MCF 10A (cell line): ENCODE measurements at regions of chr10 and their contacts with region 1.

Region 1: DNA sequence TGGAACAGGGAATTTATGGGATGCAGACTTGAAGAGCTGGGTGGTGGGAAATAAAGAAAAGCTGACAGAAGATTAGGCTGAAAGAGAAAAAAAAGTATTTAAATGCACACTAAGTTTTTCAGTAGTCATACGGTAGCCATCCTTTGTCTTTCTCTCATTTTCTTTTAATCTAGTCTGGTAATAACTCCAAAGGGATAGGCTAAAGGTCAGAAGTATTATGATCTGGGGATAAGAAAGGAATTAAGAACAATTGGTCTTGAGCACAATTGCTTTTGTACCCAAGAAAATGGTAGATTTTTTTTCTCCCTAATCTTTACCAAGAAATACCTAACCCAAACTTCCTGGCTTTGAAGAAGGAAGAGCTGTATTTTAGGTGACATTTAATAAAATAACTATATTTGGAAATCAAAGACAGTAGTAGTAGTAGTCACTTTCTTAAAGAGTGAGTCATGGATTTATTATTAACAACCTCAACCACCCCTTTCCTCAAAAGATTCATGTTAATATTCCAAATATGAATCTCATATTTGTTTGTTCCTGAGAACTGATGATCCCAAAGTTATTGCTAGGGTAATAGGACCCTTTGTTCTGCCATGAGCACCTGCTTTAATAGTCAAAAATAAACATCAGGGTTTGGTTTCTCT is 120.2 kb upstream of the ODAD2 start:
- DNase-seq: no peak
- H3K4me3 Mint-ChIP-seq: no peak overlapping the region
- H3K27ac Mint-ChIP-seq: peak overlapping the region; percentile 2
- H3K4me1 Mint-ChIP-seq: peaks cover 13% of the 10 kb centered on the region
- H3K27me3 Mint-ChIP-seq: no peaks in the 10 kb centered on the region
- CTCF ChIP-seq: no peak

Region 2: GRCh38 chr10:28054228-28054837 is 64.8 kb before region 1 on chr10:
- CTCF ChIA-PET with region 1: no interaction called
- POLR2A ChIA-PET with region 1: interaction called, 4 read pairs
- intact Hi-C with region 1: loop called (anchors 5 kb)
- DNase-seq: peak; percentile 78
- H3K4me3 Mint-ChIP-seq: peak overlapping the region; percentile 24
- H3K27ac Mint-ChIP-seq: peak overlapping the region; percentile 89
- H3K4me1 Mint-ChIP-seq: peaks cover 25% of the 10 kb centered on the region
- H3K27me3 Mint-ChIP-seq: no peaks in the 10 kb centered on the region
- CTCF ChIP-seq: no peak

Region 3: GRCh38 chr10:28326516-28327490 is 207.7 kb after region 1 on chr10:
- CTCF ChIA-PET with region 1: no interaction called
- POLR2A ChIA-PET with region 1: no interaction called
- intact Hi-C with region 1: no loop called
- DNase-seq: peak; percentile 31
- H3K4me3 Mint-ChIP-seq: no peak overlapping the region
- H3K27ac Mint-ChIP-seq: peak overlapping the region; percentile 47
- H3K4me1 Mint-ChIP-seq: peaks cover 10% of the 10 kb centered on the region
- H3K27me3 Mint-ChIP-seq: no peaks in the 10 kb centered on the region
- CTCF ChIP-seq: no peak